ENCODE measurements at regions of chr19 and their contacts with region 1.

Region 1: GRCh38 chr19:54430306-54431254 is 15.3 kb downstream of the TTYH1 start:
- DNase-seq: peak; percentile 80
- H3K4me3 Mint-ChIP-seq: peak overlapping the region; percentile 62
- H3K27ac Mint-ChIP-seq: peak overlapping the region; percentile 83
- H3K4me1 Mint-ChIP-seq: peaks cover 46% of the 10 kb centered on the region
- H3K27me3 Mint-ChIP-seq: peaks cover 21% of the 10 kb centered on the region
- CTCF ChIP-seq: peak; percentile 17

Region 2: DNA sequence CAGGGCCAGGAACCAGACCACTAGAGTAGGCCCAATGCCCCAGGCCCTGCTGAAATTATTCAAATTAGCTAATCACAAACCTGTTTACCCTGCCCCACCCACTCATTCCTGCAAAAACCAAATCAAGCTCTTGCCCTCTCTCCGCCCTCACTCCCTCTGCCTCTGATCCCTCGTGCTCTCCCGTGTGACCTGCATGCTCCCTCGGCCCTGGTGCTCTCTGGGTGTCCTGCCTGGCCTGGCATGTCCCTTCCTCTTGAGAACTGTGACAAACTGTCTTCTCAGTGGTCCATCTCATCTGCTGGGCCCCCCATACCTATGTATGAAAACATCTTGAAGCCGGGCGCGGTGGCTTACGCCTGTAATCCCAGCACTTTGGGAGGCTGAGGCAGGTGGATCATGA is 27.5 kb before region 1 on chr19:
- CTCF ChIA-PET with region 1: no interaction called
- intact Hi-C with region 1: no loop called
- DNase-seq: no peak
- H3K4me3 Mint-ChIP-seq: no peak overlapping the region
- H3K27ac Mint-ChIP-seq: no peak overlapping the region
- H3K4me1 Mint-ChIP-seq: peaks cover 8% of the 10 kb centered on the region
- H3K27me3 Mint-ChIP-seq: peaks cover 25% of the 10 kb centered on the region
- CTCF ChIP-seq: no peak

Region 3: DNA sequence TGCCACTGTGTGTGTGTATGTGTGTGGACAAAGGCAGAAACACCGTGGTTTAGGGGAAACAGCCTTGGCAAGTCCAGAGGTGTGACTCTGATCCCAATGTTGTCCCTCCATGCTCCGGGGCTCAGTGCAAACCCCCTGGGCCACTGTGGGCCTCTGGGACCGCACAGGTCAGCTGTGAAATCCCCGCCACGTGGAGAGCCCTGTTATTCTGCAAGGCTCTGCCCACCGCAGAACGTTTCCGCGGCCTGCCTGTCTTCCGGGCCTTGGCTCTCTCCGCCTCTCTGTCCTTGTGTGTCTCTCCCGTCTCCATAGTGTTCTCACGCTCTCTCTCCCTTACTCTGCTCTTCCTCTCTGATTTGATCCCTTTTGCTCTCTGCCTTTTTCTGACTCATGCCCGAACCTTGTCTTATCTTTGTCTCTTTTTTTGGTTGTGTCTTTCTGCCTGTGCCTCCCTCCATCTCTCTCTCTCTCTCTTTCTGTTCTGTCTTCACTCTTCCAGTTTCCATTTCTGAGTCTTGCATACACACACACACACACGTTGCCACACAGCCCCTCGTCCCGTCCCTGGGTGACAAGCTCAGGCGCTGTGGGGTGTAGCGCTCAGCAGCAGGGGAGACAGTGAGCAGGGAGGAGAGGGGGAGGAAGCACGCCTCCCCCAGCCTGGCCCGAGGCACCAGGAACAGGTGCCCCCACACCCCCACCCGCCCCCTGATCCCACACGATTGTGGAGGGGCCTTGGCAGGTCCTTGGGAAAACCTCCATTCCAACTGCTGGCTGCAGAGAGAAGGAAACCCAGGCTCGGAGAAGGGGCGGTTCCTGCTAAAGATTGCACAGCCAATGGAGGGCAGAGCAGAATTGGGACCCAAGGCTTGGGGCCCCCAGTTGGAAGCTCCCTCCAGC is 12.3 kb before region 1 on chr19:
- CTCF ChIA-PET with region 1: interaction called, 17 read pairs
- intact Hi-C with region 1: no loop called
- DNase-seq: no peak
- H3K4me3 Mint-ChIP-seq: no peak overlapping the region
- H3K27ac Mint-ChIP-seq: no peak overlapping the region
- H3K4me1 Mint-ChIP-seq: peaks cover 13% of the 10 kb centered on the region
- H3K27me3 Mint-ChIP-seq: peaks cover 51% of the 10 kb centered on the region
- CTCF ChIP-seq: no peak

Region 4: DNA sequence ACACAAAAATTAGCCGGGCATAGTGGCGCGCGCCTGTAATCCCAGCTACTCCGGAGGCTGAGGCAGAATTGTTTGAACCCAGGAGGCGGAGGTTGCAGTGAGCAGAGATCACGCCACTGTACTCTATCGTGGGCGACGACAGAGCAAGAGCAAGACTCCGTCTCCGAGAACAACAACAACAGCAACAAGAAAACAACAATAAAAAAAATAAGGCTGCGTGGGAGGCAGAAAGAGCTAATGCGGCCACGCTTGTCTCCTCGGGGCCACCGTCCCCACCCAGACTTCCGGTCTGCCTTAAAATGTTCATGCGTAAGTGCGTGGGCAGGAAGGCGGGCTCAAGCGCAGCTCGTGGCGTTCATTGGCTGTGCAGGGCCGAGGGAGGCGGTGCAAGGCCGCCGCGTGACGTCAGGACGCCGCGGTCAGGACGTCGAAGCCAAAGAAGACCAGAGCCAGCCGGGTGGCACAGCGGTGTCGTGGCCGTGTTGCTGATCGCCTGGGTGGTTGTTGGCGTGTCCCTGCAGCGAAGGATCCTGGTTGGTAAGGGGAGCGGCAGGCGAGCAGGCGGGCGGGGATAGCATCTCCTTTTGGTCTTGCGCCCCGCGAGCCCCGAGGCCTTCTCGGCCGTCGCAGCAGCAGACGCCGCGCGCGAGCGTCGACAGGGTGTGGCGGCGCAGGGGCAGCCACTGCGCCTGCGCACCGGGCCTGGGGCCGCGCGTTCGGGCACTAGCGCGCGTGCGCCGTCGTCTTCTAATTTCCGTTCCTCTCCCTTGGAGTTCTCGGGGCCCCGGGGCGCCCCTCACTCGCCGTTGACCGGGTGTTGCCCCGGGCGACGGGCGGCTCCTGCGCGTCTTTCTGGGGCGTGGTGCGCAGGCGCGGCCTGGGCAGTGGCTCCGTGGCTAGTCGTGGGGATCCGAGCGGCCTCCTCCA is 18.5 kb after region 1 on chr19 and contains the start of gene LENG8:
- CTCF ChIA-PET with region 1: interaction called, 7 read pairs
- intact Hi-C with region 1: loop called (anchors 2 kb)
- DNase-seq: peak; percentile 98
- H3K4me3 Mint-ChIP-seq: peak within 1 kb of the TSS; percentile 81
- H3K27ac Mint-ChIP-seq: peak within 1 kb of the TSS; percentile 92
- H3K4me1 Mint-ChIP-seq: peaks cover 24% of the 10 kb centered on the region
- H3K27me3 Mint-ChIP-seq: no peaks in the 10 kb centered on the region
- CTCF ChIP-seq: no peak
- total RNA-seq, gene LENG8: 256 and 267 TPM in 2 replicates

Region 5: DNA sequence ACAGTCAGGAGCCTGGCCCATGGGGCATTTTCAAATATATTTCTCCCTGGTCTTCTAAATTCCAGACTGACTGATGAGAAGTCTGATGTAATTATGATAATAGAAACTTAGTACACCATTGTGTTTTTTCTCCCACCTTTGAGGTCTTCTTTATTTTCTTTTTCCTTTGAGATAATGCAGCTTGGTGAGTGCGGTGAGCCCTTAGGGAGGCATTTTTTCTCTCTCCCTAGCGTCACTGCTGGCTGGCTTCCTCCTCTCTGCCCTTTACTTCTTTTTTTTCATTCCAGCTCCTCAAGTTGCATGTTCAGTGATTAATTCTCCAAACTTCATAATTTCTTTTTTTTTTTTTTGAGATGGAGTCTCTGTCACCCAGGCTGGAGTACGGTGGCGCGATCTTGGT is 55.3 kb after region 1 on chr19:
- CTCF ChIA-PET with region 1: no interaction called
- intact Hi-C with region 1: no loop called
- DNase-seq: no peak
- H3K4me3 Mint-ChIP-seq: no peak overlapping the region
- H3K27ac Mint-ChIP-seq: no peak overlapping the region
- H3K4me1 Mint-ChIP-seq: no peaks in the 10 kb centered on the region
- H3K27me3 Mint-ChIP-seq: peaks cover 48% of the 10 kb centered on the region
- CTCF ChIP-seq: no peak